B cell (primary cell): ENCODE measurements at regions of chr2 and their contacts with region 1.

Region 1: GRCh38 chr2:19362755-19363473 is 4.5 kb upstream of the OSR1 start:
- DNase-seq: peak; percentile 62
- ATAC-seq: peak; percentile 31
- H3K4me3 ChIP-seq: peak overlapping the region; percentile 56 to 99 (median 71)
- H3K4me3 Mint-ChIP-seq: peak overlapping the region; percentile 99
- H3K27ac ChIP-seq: no peak overlapping the region
- H3K27ac Mint-ChIP-seq: peak overlapping the region; percentile 67
- H3K4me1 ChIP-seq: peaks cover 42 to 45% of the 10 kb centered on the region in 2 donors
- H3K4me1 Mint-ChIP-seq: peaks cover 38% of the 10 kb centered on the region
- H3K27me3 ChIP-seq: peaks cover 0 to 46% (median 32%) of the 10 kb centered on the region in 4 experiments
- H3K27me3 Mint-ChIP-seq: peaks cover 32% of the 10 kb centered on the region
- CTCF ChIP-seq: peak; percentile 63

Region 2: DNA sequence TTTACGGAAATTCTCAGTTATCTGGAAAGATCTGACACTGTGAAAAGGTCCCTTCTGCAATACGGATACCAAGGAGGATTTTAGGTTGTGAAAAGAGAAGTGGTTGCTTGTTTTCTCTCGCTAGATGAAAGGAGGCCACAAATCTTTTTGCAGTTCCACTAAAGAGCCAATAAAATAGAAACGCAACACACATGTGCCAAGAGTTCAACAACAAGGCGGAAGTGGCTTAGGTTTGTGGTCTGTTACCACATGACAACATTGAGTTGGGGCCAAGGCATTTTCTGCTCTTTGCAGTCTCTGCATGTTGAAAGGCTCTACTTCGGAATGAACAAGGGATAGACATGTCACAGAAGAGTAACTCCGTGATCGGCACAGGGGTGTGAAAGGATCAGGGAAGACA is 111.2 kb after region 1 on chr2:
- CTCF ChIA-PET with region 1: no interaction called
- POLR2A ChIA-PET with region 1: no interaction called
- intact Hi-C with region 1: no loop called
- DNase-seq: peak; percentile 2
- ATAC-seq: no peak
- H3K4me3 ChIP-seq: no peak overlapping the region
- H3K4me3 Mint-ChIP-seq: no peak overlapping the region
- H3K27ac ChIP-seq: no peak overlapping the region
- H3K27ac Mint-ChIP-seq: no peak overlapping the region
- H3K4me1 ChIP-seq: peaks cover 0 to 5% of the 10 kb centered on the region in 2 donors
- H3K4me1 Mint-ChIP-seq: peaks cover 4% of the 10 kb centered on the region
- H3K27me3 ChIP-seq: peaks cover 0 to 5% (median 1%) of the 10 kb centered on the region in 4 experiments
- H3K27me3 Mint-ChIP-seq: peaks cover 24% of the 10 kb centered on the region
- CTCF ChIP-seq: no peak

Region 3: GRCh38 chr2:19868705-19869580 is 506.0 kb after region 1 on chr2:
- CTCF ChIA-PET with region 1: no interaction called
- POLR2A ChIA-PET with region 1: no interaction called
- intact Hi-C with region 1: loop called (anchors 5 kb)
- DNase-seq: peak; percentile 74
- ATAC-seq: peak; percentile 96
- H3K4me3 ChIP-seq: peak overlapping the region; percentile 42 to 77 (median 62)
- H3K4me3 Mint-ChIP-seq: peak overlapping the region; percentile 98
- H3K27ac ChIP-seq: peak overlapping the region; percentile 62 to 84
- H3K27ac Mint-ChIP-seq: peak overlapping the region; percentile 95
- H3K4me1 ChIP-seq: peaks cover 8 to 19% of the 10 kb centered on the region in 2 donors
- H3K4me1 Mint-ChIP-seq: peaks cover 27% of the 10 kb centered on the region
- H3K27me3 ChIP-seq: peaks cover 0 to 3% (median 0%) of the 10 kb centered on the region in 4 experiments
- H3K27me3 Mint-ChIP-seq: no peaks in the 10 kb centered on the region
- CTCF ChIP-seq: no peak